Head of caudate nucleus (tissue), 42 donors: ENCODE measurements at regions of chr7 and their contacts with region 1.

Region 1: GRCh38 chr7:149729983-149730801 is 43.2 kb downstream of the ZNF467 start:
- DNase-seq: peak in 32 of 42 donors; percentile 26 to 81 (median 54)

Region 2: DNA sequence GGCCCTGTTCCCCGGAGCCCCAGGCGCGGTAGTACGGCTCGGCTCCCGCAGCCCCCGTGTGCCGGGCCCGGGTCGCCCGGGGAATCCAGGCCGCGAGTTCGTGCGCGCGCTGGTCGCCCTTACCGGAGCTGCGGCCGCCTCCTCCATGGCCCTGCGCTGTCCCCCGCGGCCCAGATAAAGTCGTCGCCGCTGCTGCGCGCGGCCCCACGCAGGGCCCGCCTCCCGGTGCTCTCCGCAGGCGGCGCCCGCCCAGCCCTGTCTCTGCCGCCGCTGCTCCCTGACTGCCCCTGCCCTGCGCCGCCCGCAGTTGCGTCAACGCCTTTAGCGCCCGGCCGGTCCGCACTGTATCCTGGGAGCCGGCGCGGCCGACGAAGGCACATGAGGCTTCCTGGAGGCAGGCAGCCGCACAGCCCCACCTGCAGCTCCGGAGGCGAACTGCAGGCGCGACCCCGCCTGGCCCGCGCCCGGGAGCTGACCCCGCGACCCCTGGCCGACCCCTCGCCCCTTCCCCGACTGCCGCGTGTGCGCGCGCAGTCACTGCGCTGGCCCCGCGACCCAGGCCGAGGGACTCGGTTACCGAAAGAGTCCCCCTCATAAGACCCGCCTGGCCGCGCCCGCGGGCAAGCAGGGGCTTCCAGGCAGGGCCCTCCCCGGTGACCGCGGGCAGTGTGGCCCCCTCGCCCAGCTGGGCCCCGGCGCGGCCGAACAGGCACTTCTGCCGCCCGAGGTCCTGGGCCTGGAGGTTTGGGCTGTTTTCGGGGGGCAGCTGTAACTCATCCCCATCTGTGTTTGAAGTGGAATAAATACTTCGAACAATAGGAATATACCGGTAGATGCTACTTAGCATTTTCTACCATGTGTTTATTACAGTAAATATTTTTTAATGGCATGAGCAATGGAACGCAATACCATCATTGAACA is 105.5 kb before region 1 on chr7:
- intact Hi-C with region 1: loop called (anchors 5 kb)
- DNase-seq: peak; percentile 80 to 97 (median 92)

Region 3: GRCh38 chr7:149707448-149707886 is 22.7 kb before region 1 on chr7:
- intact Hi-C with region 1: no loop called
- DNase-seq: peak in 2 of 42 donors; percentile 18 to 24

Region 4: GRCh38 chr7:150631866-150632864 is 902.0 kb after region 1 on chr7 and contains the start of gene GIMAP6:
- intact Hi-C with region 1: no loop called
- DNase-seq: peak in 8 of 42 donors; percentile 2 to 45 (median 10)